Naive thymus-derived CD4-positive, alpha-beta T cell (primary cell): ENCODE measurements at regions of chr1 and their contacts with region 1.

Region 1: DNA sequence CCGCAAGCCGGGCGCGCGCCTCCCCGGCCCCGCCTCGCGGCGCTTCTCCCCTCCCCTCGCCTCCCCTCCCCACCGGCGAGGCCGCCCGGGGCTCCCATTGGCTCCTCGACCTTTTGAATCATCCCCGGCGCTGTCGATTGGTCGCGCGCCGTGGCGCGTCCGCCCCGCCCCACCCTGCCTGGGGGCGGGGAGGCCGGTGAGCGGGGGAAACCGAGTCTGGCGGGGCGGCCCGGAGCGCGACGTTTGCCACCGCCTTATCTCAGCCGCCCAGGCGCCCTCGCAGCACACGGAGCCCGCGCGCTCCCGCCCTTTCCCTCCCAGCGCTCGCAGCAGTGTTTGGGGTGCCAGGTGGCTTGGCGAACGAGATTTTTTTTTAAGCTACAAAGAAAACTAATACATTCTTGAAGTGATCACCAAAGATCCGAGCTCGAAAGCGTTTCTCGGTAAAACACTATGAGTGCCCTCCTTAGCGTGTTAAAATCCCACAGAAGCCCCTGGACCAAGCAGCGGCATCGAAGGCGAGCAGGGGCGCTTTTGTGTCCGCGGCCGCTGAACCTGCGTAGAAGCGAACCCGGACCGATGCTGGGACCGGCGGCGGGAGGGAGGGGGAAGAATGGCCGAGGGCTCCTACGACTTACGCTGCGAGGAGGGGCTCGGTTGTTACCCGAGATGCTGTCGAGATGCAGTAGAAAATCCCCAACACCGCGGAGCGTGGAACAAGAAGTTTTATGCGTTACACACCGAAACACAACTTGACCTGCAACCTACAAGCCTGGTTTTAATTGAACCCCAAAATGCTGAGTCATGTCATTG is 436 bp upstream of the LBR start:
- DNase-seq: peak; percentile 81 to 94 (median 91)
- ATAC-seq: peak; percentile 95
- H3K4me3 ChIP-seq: peak overlapping the region; percentile 71
- H3K4me3 Mint-ChIP-seq: peak overlapping the region; percentile 88 to 99 (median 91)
- H3K27ac ChIP-seq: peak overlapping the region; percentile 78
- H3K27ac Mint-ChIP-seq: peak overlapping the region; percentile 71 to 97 (median 90)
- H3K4me1 ChIP-seq: peaks cover 31% of the 10 kb centered on the region in 2 donors
- H3K4me1 Mint-ChIP-seq: peaks cover 41 to 52% (median 46%) of the 10 kb centered on the region in 7 donors
- H3K27me3 ChIP-seq: no peaks in the 10 kb centered on the region
- H3K27me3 Mint-ChIP-seq: no peaks in the 10 kb centered on the region

Region 2: GRCh38 chr1:223845810-223846682 is 1582.2 kb before region 1 on chr1 and contains the start of gene TP53BP2:
- CTCF ChIA-PET with region 1: no interaction called
- POLR2A ChIA-PET with region 1: no interaction called
- intact Hi-C with region 1: loop called in 1 of 2 experiments (anchors 10 kb)
- DNase-seq: peak; percentile 86 to 95 (median 90)
- ATAC-seq: peak; percentile 92
- H3K4me3 ChIP-seq: peak within 1 kb of the TSS; percentile 84
- H3K4me3 Mint-ChIP-seq: peak within 1 kb of the TSS; percentile 88 to 99 (median 96)
- H3K27ac ChIP-seq: peak within 1 kb of the TSS; percentile 99
- H3K27ac Mint-ChIP-seq: peak within 1 kb of the TSS; percentile 94 to 99 (median 98)
- H3K4me1 ChIP-seq: peaks cover 14 to 27% of the 10 kb centered on the region in 2 donors
- H3K4me1 Mint-ChIP-seq: peaks cover 23 to 53% (median 40%) of the 10 kb centered on the region in 7 donors
- H3K27me3 ChIP-seq: no peaks in the 10 kb centered on the region
- H3K27me3 Mint-ChIP-seq: peaks cover 0 to 4% (median under 1%) of the 10 kb centered on the region in 5 donors
- total RNA-seq, gene TP53BP2: 30.3 to 120 (median 45.4) TPM

Region 3: GRCh38 chr1:224096773-224097172 is 1331.5 kb before region 1 on chr1:
- CTCF ChIA-PET with region 1: no interaction called
- POLR2A ChIA-PET with region 1: no interaction called
- intact Hi-C with region 1: no loop called
- DNase-seq: no peak
- ATAC-seq: no peak
- H3K4me3 ChIP-seq: no peak overlapping the region
- H3K4me3 Mint-ChIP-seq: no peak overlapping the region
- H3K27ac ChIP-seq: no peak overlapping the region
- H3K27ac Mint-ChIP-seq: peak overlapping the region in 1 of 9 donors; percentile 84
- H3K4me1 ChIP-seq: no peaks in the 10 kb centered on the region
- H3K4me1 Mint-ChIP-seq: no peaks in the 10 kb centered on the region
- H3K27me3 ChIP-seq: no peaks in the 10 kb centered on the region
- H3K27me3 Mint-ChIP-seq: peaks cover 0 to 29% (median 6%) of the 10 kb centered on the region in 5 donors

Region 4: DNA sequence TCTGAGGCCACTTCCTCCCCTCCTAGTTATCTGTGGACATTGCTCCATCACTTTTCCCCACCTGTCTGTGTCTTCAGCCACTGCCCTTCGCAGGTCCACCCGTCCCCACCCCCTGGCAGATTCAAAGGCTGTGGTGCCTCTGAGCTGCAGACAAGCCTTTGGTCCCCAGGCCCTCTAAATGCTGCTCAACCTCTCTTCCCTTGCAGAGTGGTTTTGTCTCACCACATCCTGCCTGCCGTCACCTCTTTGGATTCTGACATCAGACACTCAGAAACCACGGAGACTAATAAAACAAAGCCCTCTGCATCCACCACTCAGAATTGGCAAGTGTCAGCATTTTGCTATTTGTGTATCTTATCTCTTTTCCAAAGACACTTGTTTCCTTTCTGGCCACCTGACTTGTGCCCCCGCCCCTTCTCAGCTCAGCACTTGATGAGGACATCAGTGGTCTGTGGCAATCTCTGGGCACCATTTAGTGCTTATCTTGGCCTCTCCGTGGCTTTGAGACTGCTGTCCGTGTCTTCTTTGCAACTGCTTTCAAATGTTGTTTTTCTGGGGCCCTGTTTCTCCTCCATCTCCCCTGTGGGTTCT is 804.4 kb before region 1 on chr1:
- CTCF ChIA-PET with region 1: no interaction called
- POLR2A ChIA-PET with region 1: no interaction called
- intact Hi-C with region 1: loop called in 1 of 2 experiments (anchors 5 kb)
- DNase-seq: peak in 8 of 9 donors; percentile 70 to 89 (median 83)
- ATAC-seq: peak; percentile 93
- H3K4me3 ChIP-seq: peak overlapping the region; percentile 40
- H3K4me3 Mint-ChIP-seq: peak overlapping the region; percentile 58 to 80 (median 72)
- H3K27ac ChIP-seq: no peak overlapping the region
- H3K27ac Mint-ChIP-seq: peak overlapping the region; percentile 66 to 95 (median 90)
- H3K4me1 ChIP-seq: peaks cover 18 to 25% of the 10 kb centered on the region in 2 donors
- H3K4me1 Mint-ChIP-seq: peaks cover 22 to 47% (median 31%) of the 10 kb centered on the region in 7 donors
- H3K27me3 ChIP-seq: no peaks in the 10 kb centered on the region
- H3K27me3 Mint-ChIP-seq: peaks cover 40 to 45% (median 44%) of the 10 kb centered on the region in 5 donors

Region 5: DNA sequence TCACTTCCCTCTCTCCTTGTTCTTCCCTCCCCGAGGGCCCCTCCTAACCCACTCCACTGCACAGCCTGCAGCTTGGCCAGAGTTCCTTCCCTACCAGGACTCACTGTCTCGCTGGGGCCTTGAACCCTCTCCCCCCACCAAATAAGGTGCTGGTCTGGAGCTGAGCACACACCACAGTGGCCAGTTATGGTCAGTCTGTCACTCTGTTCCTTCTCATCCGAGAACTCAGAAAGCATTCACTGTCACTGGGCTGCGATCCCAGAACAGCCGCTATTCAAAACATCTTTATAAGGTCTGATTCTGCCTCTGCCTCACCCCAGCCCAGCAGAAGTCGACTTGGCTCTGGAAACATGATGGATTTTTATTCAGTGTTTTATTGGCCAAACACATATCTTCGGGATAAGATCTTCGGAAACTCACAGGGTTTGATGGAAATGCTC is 19.4 kb after region 1 on chr1:
- CTCF ChIA-PET with region 1: interaction called, 13 read pairs
- POLR2A ChIA-PET with region 1: interaction called, 236 read pairs
- intact Hi-C with region 1: loop called (anchors 1 kb)
- DNase-seq: no peak
- ATAC-seq: no peak
- H3K4me3 ChIP-seq: no peak overlapping the region
- H3K4me3 Mint-ChIP-seq: peak overlapping the region in 2 of 10 donors; percentile 16 to 56
- H3K27ac ChIP-seq: no peak overlapping the region
- H3K27ac Mint-ChIP-seq: peak overlapping the region in 8 of 9 donors; percentile 21 to 94 (median 55)
- H3K4me1 ChIP-seq: peaks cover 21 to 37% of the 10 kb centered on the region in 2 donors
- H3K4me1 Mint-ChIP-seq: peaks cover 51 to 72% (median 62%) of the 10 kb centered on the region in 7 donors
- H3K27me3 ChIP-seq: no peaks in the 10 kb centered on the region
- H3K27me3 Mint-ChIP-seq: peaks cover 0 to 2% (median 0%) of the 10 kb centered on the region in 5 donors

Region 6: GRCh38 chr1:225652729-225653462 is 224.6 kb after region 1 on chr1 and contains the start of gene ENAH:
- CTCF ChIA-PET with region 1: no interaction called
- POLR2A ChIA-PET with region 1: no interaction called
- intact Hi-C with region 1: no loop called
- DNase-seq: peak in 7 of 9 donors; percentile 12 to 49 (median 21)
- ATAC-seq: peak; percentile 72
- H3K4me3 ChIP-seq: peak within 1 kb of the TSS; percentile 58
- H3K4me3 Mint-ChIP-seq: peak within 1 kb of the TSS; percentile 79 to 95 (median 88)
- H3K27ac ChIP-seq: no peak within 1 kb of the TSS
- H3K27ac Mint-ChIP-seq: peak within 1 kb of the TSS in 4 of 9 donors; percentile 16 to 78 (median 70)
- H3K4me1 ChIP-seq: peaks cover 5 to 12% of the 10 kb centered on the region in 2 donors
- H3K4me1 Mint-ChIP-seq: peaks cover 9 to 19% (median 16%) of the 10 kb centered on the region in 7 donors
- H3K27me3 ChIP-seq: peaks cover 0 to 12% of the 10 kb centered on the region in 2 donors
- H3K27me3 Mint-ChIP-seq: peaks cover 30 to 71% (median 40%) of the 10 kb centered on the region in 5 donors
- total RNA-seq, gene ENAH: 0.08 to 0.42 (median 0.16) TPM in 3 of 5 experiments, not detected in the others

Region 7: GRCh38 chr1:225881969-225882693 is 453.9 kb after region 1 on chr1 and contains the start of gene TMEM63A:
- CTCF ChIA-PET with region 1: no interaction called
- POLR2A ChIA-PET with region 1: interaction called, 3 read pairs
- intact Hi-C with region 1: loop called (anchors 2 to 5 kb)
- DNase-seq: peak; percentile 83 to 89 (median 87)
- ATAC-seq: peak; percentile 84
- H3K4me3 ChIP-seq: peak within 1 kb of the TSS; percentile 80
- H3K4me3 Mint-ChIP-seq: peak within 1 kb of the TSS; percentile 89 to 99 (median 97)
- H3K27ac ChIP-seq: peak within 1 kb of the TSS; percentile 90
- H3K27ac Mint-ChIP-seq: peak within 1 kb of the TSS; percentile 91 to 98 (median 96)
- H3K4me1 ChIP-seq: peaks cover 41% of the 10 kb centered on the region in 2 donors
- H3K4me1 Mint-ChIP-seq: peaks cover 37 to 50% (median 48%) of the 10 kb centered on the region in 7 donors
- H3K27me3 ChIP-seq: no peaks in the 10 kb centered on the region
- H3K27me3 Mint-ChIP-seq: peaks cover 0 to 21% (median 0%) of the 10 kb centered on the region in 5 donors
- total RNA-seq, gene TMEM63A: 189 to 611 (median 383) TPM

Region 8: DNA sequence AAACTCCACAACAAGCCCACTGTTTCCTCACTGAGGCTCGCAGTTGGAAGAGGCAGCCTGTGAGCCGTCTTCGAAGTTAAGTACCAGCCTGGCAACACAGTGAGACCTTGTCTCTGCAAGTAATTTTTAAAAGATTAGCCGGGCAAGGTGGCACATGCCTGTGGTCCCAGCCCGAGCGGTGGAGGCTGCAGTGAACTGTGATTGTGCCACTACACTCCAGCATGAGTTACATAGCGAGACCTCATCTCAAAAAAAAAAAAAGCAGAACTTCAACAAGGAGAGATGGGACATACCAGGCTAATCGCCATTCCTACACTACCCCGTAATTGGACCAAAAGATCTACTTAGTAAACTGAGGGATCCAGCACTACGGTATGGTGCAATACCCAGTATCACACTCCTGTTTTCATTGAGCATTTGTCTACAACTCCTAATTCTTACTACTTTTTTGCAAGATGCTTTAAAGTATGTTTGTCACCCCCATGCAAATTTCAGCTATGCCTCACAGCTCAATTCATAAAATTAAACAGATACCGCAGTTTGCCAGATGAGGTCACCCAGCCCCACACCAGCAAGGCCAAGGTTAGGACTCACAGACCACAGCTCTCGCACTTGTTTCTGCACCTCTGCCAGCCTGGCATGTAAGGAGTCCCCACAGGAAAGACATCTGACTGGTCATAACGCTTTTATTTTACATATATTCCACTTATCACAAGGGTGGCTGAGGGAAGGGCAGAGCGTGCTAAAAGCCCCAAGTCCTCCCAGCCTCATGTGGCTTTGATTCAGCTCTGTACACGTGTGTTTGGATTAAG is 549.9 kb after region 1 on chr1:
- CTCF ChIA-PET with region 1: interaction called, 3 read pairs
- POLR2A ChIA-PET with region 1: interaction called, 6 read pairs
- intact Hi-C with region 1: loop called (anchors 5 kb)
- DNase-seq: no peak
- ATAC-seq: peak; percentile 30
- H3K4me3 ChIP-seq: no peak overlapping the region
- H3K4me3 Mint-ChIP-seq: no peak overlapping the region
- H3K27ac ChIP-seq: no peak overlapping the region
- H3K27ac Mint-ChIP-seq: peak overlapping the region in 1 of 9 donors; percentile 20
- H3K4me1 ChIP-seq: no peaks in the 10 kb centered on the region
- H3K4me1 Mint-ChIP-seq: peaks cover 0 to 9% (median 6%) of the 10 kb centered on the region in 7 donors
- H3K27me3 ChIP-seq: no peaks in the 10 kb centered on the region
- H3K27me3 Mint-ChIP-seq: no peaks in the 10 kb centered on the region

Region 9: GRCh38 chr1:226186124-226187018 is 758.1 kb after region 1 on chr1 and contains the start of gene ACBD3:
- CTCF ChIA-PET with region 1: no interaction called
- POLR2A ChIA-PET with region 1: no interaction called
- intact Hi-C with region 1: loop called in 1 of 2 experiments (anchors 5 kb)
- DNase-seq: peak; percentile 66 to 87 (median 83)
- ATAC-seq: peak; percentile 96
- H3K4me3 ChIP-seq: peak within 1 kb of the TSS; percentile 97
- H3K4me3 Mint-ChIP-seq: peak within 1 kb of the TSS; percentile 91 to 99 (median 94)
- H3K27ac ChIP-seq: peak within 1 kb of the TSS; percentile 84
- H3K27ac Mint-ChIP-seq: peak within 1 kb of the TSS; percentile 88 to 98 (median 94)
- H3K4me1 ChIP-seq: peaks cover 23 to 30% of the 10 kb centered on the region in 2 donors
- H3K4me1 Mint-ChIP-seq: peaks cover 28 to 44% (median 36%) of the 10 kb centered on the region in 7 donors
- H3K27me3 ChIP-seq: no peaks in the 10 kb centered on the region
- H3K27me3 Mint-ChIP-seq: no peaks in the 10 kb centered on the region
- total RNA-seq, gene ACBD3: 19.6 to 29.9 (median 26.1) TPM